ENCODE measurements at regions of chr3 and their contacts with region 1.

Region 1: GRCh38 chr3:171566803-171567422 is 106.7 kb upstream of the TNIK start:
- DNase-seq: no peak
- H3K4me3 ChIP-seq: no peak overlapping the region
- CTCF ChIP-seq: peak; percentile 56

Region 2: DNA sequence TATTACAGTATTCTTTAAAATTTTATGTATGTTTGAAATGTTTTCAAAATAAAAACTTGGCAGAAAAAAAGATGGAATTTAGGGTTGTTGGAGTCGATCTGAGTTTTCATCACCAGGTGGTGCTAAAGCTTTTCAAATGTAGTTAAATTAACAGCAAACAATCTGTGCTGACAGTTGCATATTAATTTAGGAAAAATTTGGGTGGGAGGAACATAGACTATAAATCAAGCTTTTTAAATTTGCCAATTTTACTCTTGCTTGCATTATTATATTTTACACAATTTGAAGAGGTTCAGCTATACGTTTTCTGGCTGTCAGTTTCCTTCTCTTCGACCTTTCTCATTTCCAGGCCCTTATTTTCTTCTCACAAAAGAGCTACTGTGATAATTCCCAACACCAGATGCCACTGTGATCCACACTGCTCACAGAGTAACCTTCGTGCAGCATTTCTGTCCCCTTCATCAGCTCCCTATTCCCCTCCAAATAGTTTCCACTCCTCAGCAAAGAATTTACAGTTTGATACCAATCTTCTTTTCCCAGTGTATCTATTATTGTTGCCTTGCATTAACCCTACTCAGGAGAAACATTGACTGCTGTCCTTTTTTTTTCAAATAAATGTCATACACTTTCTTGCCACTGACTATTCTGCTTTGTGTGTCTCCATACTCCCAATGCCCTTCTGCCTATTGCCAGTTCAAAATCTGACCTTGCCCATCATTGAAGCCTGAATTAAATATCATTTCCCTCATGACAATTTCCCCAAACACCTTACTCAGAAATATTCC is 605.1 kb before region 1 on chr3:
- CTCF ChIA-PET with region 1: interaction called, 111 read pairs
- POLR2A ChIA-PET with region 1: no interaction called
- DNase-seq: no peak
- H3K4me3 ChIP-seq: no peak overlapping the region
- CTCF ChIP-seq: peak; percentile 27

Region 3: GRCh38 chr3:170977911-170978310 is 589.0 kb before region 1 on chr3:
- CTCF ChIA-PET with region 1: interaction called, 11 read pairs
- POLR2A ChIA-PET with region 1: no interaction called
- DNase-seq: no peak
- H3K4me3 ChIP-seq: no peak overlapping the region
- CTCF ChIP-seq: no peak

Region 4: GRCh38 chr3:171049861-171050444 is 517.0 kb before region 1 on chr3:
- CTCF ChIA-PET with region 1: interaction called, 46 read pairs
- POLR2A ChIA-PET with region 1: no interaction called
- DNase-seq: no peak
- H3K4me3 ChIP-seq: no peak overlapping the region
- CTCF ChIP-seq: peak; percentile 66

Region 5: DNA sequence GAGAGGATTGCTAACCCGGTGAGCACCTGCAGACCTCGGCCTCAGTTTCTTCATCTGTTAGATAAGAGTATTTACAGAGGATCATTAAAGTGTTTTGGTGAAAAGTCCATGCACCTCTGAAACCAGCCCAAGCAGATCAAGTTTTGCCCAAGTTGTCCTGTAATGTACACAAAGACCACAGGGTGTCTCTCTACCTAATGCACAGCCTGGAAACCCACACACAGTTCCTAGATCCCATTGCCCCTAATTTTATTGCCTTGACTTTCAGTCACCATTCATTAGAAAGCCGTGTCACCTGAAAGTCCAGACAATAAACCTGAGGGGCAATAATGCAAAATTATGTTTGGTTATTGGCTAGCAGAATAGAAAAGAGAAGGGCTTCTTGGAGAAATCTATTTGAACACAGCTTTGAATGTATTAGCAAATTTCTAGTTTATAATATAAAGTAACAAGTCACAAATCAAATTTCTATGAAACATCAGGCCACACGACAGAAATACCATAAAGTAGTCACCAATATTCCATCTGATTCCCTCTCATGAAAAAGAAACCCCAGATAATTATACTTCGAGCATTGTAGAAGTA is 379.1 kb before region 1 on chr3:
- CTCF ChIA-PET with region 1: interaction called, 92 read pairs
- POLR2A ChIA-PET with region 1: no interaction called
- DNase-seq: no peak
- H3K4me3 ChIP-seq: no peak overlapping the region
- CTCF ChIP-seq: peak; percentile 59

Region 6: DNA sequence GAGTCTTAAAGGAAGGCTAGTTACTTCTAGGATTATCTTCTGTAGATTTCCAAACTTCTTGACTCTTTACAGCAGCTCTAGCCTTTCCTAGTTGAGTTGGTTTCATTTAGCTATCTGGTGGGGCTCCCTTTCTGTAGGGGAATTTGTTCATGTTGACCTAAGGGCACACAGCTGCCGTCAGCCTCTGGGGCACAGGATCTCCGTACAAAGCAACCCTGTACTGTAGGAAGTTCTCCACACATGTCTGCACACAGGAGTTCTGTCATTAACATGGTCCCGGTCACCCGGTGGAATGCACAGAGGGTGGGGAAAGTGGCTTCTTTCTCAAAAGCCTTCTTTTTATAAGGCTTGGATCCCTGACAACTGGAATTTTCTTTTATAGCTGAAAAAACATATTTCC is 18.0 kb before region 1 on chr3:
- CTCF ChIA-PET with region 1: interaction called, 15 read pairs
- POLR2A ChIA-PET with region 1: no interaction called
- DNase-seq: no peak
- H3K4me3 ChIP-seq: no peak overlapping the region
- CTCF ChIP-seq: no peak

Measured in AG04449 (cell line).